AG04449 (cell line): ENCODE measurements at regions of chr19 and their contacts with region 1.

Region 1: GRCh38 chr19:1113033-1113985 is 9.5 kb downstream of the GPX4 start:
- DNase-seq: peak; percentile 47
- H3K4me3 ChIP-seq: no peak overlapping the region
- CTCF ChIP-seq: peak; percentile 95

Region 2: DNA sequence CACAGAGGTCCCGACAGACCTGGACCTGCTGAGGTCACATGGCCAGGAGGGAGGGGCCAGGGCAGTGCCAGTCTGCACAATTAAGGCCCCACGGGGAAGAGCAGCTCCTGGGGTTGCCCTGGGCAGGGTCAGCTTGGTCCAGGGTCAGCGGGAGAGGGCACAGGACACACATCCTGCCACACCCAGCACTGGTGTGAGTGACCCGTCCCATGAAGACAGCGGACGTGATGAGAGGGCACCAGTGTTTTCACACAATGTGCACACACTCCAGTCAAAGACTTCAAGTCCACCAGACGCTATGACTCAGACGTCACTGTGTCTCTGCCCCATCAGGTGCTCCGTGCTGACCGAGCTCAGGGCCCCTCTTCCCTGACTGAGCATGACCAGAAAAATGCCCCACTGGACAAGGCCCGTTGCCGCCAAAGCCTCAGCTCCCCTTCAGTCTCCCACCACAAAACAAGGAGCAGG is 96.6 kb before region 1 on chr19:
- CTCF ChIA-PET with region 1: no interaction called
- POLR2A ChIA-PET with region 1: no interaction called
- DNase-seq: no peak
- H3K4me3 ChIP-seq: peak overlapping the region; percentile 23
- CTCF ChIP-seq: no peak

Region 3: GRCh38 chr19:1085676-1086442 is 27.4 kb before region 1 on chr19:
- CTCF ChIA-PET with region 1: no interaction called
- POLR2A ChIA-PET with region 1: no interaction called
- DNase-seq: no peak
- H3K4me3 ChIP-seq: no peak overlapping the region
- CTCF ChIP-seq: no peak

Region 4: DNA sequence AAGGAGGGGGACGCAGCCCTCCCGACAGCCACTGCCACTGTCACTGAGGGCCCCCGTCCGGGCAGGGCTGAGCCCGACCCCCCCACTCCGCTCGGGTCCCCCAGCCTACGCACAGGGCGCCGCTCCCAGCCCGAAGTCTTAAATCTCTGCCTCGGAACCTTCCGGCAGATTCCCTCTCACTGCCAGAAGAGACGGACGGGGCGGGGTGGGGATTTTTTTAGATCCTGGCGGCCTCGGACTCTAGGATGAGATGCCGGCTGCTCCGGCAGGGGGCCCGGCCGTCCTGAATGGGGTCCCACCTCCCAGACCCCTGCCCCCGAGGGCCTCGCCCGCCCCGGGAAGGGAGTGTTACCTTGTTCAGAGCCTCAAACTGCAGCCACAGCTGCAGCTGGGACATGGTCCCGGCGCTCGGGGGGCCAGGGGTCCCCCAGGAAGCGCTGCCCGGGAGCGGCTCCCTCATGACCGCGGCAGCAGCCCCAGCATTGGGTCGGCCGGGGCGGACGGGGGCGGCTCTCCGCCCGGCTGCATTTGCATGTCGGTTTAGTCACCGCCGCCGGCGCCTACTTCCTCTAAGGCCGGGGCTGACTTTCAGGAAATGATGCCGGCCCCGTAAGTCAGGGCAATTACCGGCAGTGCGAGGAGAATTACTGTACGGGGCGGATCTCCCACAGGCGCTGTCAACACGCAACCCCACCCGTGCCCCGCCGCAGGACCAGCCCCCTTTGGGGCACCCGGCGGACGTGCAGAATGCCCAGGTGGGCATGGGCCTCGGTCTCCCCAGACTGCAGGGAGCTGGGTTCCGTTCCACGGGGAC is 18.6 kb after region 1 on chr19:
- CTCF ChIA-PET with region 1: interaction called, 37 read pairs
- POLR2A ChIA-PET with region 1: interaction called, 5 read pairs
- DNase-seq: peak; percentile 50
- H3K4me3 ChIP-seq: peak overlapping the region; percentile 75
- CTCF ChIP-seq: no peak

Region 5: DNA sequence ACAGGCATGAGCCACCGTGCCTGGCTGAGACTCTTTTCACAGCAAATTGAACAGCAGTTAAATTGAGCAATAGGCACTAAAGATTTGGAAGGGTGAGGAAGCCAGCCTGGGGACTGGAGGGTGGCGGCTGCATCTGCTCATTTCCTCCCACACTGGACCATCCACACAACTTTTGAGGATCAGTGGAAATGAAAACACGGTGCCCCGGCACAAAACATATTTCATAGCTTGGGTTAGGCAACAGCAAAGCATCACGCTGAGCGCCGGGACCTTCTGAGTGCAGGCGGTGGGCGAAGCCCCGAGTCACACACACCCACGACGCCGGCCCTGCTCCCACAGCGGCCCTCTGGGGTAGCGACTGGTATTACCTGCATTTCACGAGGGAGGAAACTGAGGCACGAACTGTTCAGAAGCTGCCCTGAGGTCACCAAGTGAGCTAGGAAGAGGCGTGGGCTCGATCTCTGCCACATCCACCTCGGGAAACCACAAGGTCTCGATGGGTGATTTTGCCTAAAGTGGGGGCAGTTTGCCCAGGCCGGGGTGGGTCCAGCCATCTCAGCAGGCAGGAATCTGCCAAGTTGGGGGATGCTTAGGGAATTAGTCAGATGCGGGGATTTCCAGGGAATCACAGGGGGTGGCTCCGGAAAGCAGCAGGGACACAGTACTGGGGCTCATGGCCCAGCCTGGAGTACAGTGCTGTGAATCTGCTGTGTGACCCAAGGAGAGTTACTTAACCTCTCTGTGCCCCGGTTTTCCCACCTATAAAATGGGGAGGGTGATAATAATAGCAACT is 64.2 kb after region 1 on chr19:
- CTCF ChIA-PET with region 1: interaction called, 12 read pairs
- POLR2A ChIA-PET with region 1: no interaction called
- DNase-seq: peak; percentile 84
- H3K4me3 ChIP-seq: no peak overlapping the region; the same call in none of the 2 replicates
- CTCF ChIP-seq: peak; percentile 1

Region 6: DNA sequence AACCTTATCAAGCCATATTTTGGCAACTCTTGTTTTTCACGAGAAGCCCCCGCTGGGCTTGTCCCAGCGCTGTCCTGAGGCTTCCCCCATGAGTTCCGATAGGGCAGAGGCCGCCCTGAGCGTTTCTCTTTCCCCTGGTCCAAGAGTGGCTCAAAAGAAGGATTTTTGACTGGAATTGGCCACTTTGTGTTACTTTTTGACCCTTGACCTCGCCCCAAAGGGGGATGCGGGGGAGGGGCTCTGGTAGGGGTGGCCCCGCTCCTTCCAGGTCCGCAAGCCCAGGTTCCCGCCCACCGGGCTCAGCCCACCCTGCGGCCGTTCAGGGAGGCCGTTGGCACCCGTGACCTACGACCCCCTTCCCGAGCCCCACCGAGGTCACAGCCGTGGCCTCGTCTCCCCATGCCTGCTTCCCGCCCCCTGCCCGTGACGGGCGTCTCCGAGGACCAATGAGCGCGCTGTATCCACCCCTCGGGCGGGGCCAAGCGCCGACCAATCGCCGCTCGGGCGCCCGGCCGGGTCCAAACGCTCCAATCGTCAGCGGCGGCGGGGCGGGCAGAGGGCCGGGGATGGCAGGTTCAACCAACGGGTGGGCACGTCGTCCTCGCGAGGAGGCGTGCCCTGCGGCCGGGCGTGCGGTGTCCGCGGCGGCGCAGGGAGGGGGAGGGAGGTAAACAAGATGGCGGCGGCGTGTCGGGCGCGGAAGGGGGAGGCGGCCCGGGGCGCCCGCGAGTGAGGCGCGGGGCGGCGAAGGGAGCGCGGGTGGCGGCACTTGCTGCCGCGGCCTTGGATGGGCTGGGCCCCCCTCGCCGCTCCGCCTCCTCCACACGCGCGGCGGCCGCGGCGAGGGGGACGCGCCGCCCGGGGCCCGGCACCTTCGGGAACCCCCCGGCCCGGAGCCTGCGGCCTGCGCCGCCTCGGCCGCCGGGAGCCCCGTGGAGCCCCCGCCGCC is 92.1 kb after region 1 on chr19 and contains the start of gene STK11:
- CTCF ChIA-PET with region 1: interaction called, 30 read pairs
- POLR2A ChIA-PET with region 1: no interaction called
- DNase-seq: peak; percentile 65
- H3K4me3 ChIP-seq: peak within 1 kb of the TSS; percentile 75
- CTCF ChIP-seq: no peak